GM12878 (cell line): ENCODE measurements at regions of chr12 and their contacts with region 1.

Region 1: GRCh38 chr12:74892057-74892633 is 317.5 kb downstream of the KCNC2 start:
- DNase-seq: no peak
- ATAC-seq: no peak
- H3K4me3 ChIP-seq: no peak overlapping the region
- H3K27ac ChIP-seq: no peak overlapping the region
- H3K4me1 ChIP-seq: no peaks in the 10 kb centered on the region
- H3K27me3 ChIP-seq: no peaks in the 10 kb centered on the region
- CTCF ChIP-seq: no peak
- EP300 ChIP-seq: no peak
- POLR2A ChIP-seq: no peak
- RAD21 ChIP-seq: no peak

Region 2: DNA sequence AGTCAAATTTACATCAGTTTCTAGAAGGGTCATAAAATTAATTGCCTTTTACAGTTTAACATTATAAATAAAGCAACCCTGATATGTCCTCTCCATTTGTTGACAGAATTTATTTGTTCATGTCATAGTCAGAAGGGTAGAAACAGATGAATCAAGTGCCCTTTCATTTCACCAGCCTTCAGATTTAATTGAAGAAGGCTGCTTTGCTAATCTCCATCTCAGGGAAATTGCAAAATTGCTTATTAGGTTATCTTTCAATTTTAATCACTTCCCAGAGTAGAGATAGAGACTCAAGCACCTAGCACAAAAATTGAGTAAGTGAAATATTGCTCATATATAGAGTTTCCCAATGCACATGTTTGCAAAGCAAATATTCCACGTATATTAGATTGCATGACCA is 277.7 kb before region 1 on chr12:
- CTCF ChIA-PET with region 1: no interaction called
- POLR2A ChIA-PET with region 1: no interaction called
- RAD21 ChIA-PET with region 1: no interaction called
- SMC1A ChIA-PET with region 1: no interaction called
- in situ Hi-C with region 1: no loop called
- intact Hi-C with region 1: no loop called
- DNase-seq: no peak
- ATAC-seq: no peak
- H3K4me3 ChIP-seq: no peak overlapping the region
- H3K27ac ChIP-seq: no peak overlapping the region
- H3K4me1 ChIP-seq: no peaks in the 10 kb centered on the region
- H3K27me3 ChIP-seq: no peaks in the 10 kb centered on the region
- CTCF ChIP-seq: no peak
- EP300 ChIP-seq: no peak
- POLR2A ChIP-seq: no peak
- RAD21 ChIP-seq: no peak

Region 3: GRCh38 chr12:74752215-74752614 is 139.9 kb before region 1 on chr12:
- CTCF ChIA-PET with region 1: no interaction called
- POLR2A ChIA-PET with region 1: no interaction called
- RAD21 ChIA-PET with region 1: no interaction called
- SMC1A ChIA-PET with region 1: no interaction called
- in situ Hi-C with region 1: no loop called
- intact Hi-C with region 1: no loop called
- DNase-seq: no peak
- ATAC-seq: no peak
- H3K4me3 ChIP-seq: no peak overlapping the region
- H3K27ac ChIP-seq: no peak overlapping the region
- H3K4me1 ChIP-seq: no peaks in the 10 kb centered on the region
- H3K27me3 ChIP-seq: no peaks in the 10 kb centered on the region
- CTCF ChIP-seq: no peak
- EP300 ChIP-seq: no peak
- POLR2A ChIP-seq: no peak
- RAD21 ChIP-seq: no peak

Region 4: DNA sequence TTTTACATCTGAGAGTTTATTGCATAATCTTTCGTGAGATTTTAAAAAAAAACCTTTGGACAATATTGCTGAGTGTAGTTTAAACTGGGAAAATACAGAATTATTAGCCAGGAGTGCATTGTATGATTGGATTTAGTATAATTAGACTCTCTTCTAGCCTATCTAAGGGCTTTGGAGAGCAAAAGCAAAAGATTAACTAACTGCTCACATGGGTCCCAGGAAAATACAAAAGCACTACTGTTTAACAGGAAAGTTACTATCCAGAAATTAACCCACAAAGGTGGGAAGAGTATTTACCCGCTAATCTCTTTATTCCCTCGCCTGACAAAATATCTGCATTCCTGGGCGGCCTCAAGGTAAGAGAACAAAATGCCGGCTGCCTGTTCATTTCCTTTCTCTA is 45.0 kb before region 1 on chr12:
- CTCF ChIA-PET with region 1: no interaction called
- POLR2A ChIA-PET with region 1: no interaction called
- RAD21 ChIA-PET with region 1: no interaction called
- SMC1A ChIA-PET with region 1: no interaction called
- in situ Hi-C with region 1: no loop called
- intact Hi-C with region 1: no loop called
- DNase-seq: no peak
- ATAC-seq: no peak
- H3K4me3 ChIP-seq: no peak overlapping the region
- H3K27ac ChIP-seq: no peak overlapping the region
- H3K4me1 ChIP-seq: no peaks in the 10 kb centered on the region
- H3K27me3 ChIP-seq: no peaks in the 10 kb centered on the region
- CTCF ChIP-seq: no peak
- EP300 ChIP-seq: no peak
- POLR2A ChIP-seq: no peak
- RAD21 ChIP-seq: no peak

Region 5: DNA sequence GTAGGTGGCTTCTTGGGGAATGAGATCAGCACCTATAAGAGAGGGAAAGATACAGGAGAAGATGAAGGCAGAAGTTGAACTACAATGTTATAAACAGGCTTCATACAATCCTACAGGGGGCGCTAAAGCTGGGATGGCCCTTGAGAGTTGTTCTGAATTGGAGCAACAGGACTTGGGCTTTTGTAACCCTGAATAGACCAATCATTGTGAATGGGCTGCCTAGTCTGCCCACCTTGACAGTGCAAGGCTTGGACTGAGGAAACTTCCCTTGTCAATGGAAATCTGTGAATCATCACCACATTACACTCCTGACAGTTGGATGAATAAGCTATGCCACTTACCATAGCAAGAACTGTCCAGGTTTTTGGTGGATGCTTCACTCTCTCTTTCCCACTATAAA is 11.4 kb after region 1 on chr12:
- CTCF ChIA-PET with region 1: interaction called, 12 read pairs
- POLR2A ChIA-PET with region 1: no interaction called
- RAD21 ChIA-PET with region 1: interaction called, 4 read pairs
- SMC1A ChIA-PET with region 1: interaction called, 4 read pairs
- in situ Hi-C with region 1: no loop called
- intact Hi-C with region 1: no loop called
- DNase-seq: no peak
- ATAC-seq: peak; percentile 33; the same call in 1 of the 3 replicates
- H3K4me3 ChIP-seq: no peak overlapping the region; the same call in 1 of the 2 replicates
- H3K27ac ChIP-seq: no peak overlapping the region
- H3K4me1 ChIP-seq: no peaks in the 10 kb centered on the region
- H3K27me3 ChIP-seq: no peaks in the 10 kb centered on the region
- CTCF ChIP-seq: peak; percentile 24 to 34 (median 29); a peak in 4 of 6 replicates
- EP300 ChIP-seq: no peak
- POLR2A ChIP-seq: no peak
- RAD21 ChIP-seq: no peak